ENCODE measurements at regions of chr1 and their contacts with region 1.

Region 1: GRCh38 chr1:167460836-167461235 is 57.5 kb downstream of the CD247 start:
- DNase-seq: peak; percentile 27 to 43
- H3K4me3 ChIP-seq: peak overlapping the region in 2 of 3 donors; percentile 3 to 37
- H3K27ac ChIP-seq: no peak overlapping the region
- H3K4me1 ChIP-seq: peaks cover 0 to 6% of the 10 kb centered on the region in 2 donors
- H3K27me3 ChIP-seq: no peaks in the 10 kb centered on the region
- CTCF ChIP-seq: no peak
- POLR2A ChIP-seq: no peak

Region 2: GRCh38 chr1:168379110-168379860 is 918.4 kb after region 1 on chr1:
- intact Hi-C with region 1: loop called (anchors 5 kb)
- DNase-seq: no peak
- H3K4me3 ChIP-seq: no peak overlapping the region
- H3K27ac ChIP-seq: no peak overlapping the region
- H3K4me1 ChIP-seq: no peaks in the 10 kb centered on the region
- H3K27me3 ChIP-seq: no peaks in the 10 kb centered on the region
- CTCF ChIP-seq: no peak
- POLR2A ChIP-seq: no peak